ENCODE measurements at regions of chr20 and their contacts with region 1.

Region 1: DNA sequence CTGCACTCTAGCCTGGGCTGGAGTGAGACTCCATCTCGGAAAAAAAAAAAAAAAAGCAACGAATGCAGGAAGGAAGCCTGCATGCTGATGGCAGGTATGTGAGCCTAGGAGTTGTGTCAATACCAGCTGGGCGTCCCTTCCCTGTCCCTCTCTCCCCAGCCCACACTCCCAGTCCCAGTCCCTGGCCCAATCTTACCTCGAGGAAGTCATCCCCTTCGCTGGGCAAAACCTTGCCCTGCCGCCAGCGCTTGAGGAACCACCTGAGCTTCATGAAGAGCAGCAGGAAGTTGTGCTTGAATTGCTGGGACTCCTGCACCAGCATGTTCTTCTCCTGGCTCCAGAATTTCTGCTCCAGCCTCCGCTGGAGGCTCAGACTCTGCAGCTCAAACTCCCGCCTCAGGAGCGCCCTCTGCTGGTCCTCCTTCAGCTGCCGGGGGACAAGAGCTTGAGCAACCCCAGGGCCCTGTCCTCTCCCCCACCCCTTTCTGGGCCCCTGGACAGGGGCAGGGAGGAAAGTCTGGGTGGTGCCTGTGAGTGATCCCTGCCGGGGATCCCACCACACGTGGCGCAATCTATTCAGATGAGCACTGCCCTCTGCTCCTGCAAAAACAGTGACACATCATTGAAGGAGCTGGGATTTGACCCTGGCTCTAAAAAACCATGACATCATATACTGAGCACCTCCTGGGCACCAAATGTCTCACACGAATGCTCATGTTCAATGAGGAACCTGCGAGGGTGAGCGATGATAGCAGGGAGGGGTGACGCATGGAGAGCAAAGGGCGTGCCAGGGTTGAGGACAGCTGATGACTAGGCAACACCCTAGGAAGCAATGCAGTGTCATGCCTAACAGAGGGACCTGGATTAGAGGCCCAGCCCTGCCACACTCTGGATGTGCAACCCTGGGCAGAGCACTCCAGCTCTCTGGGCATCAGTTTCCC is 35.0 kb upstream of the DSN1 start:
- DNase-seq: peak; percentile 88
- H3K27ac ChIP-seq: peak overlapping the region; percentile 65
- CTCF ChIP-seq: peak; percentile 97

Region 2: GRCh38 chr20:36792422-36792821 is 16.2 kb before region 1 on chr20:
- CTCF ChIA-PET with region 1: interaction called, 26 read pairs
- POLR2A ChIA-PET with region 1: no interaction called
- DNase-seq: peak; percentile 76
- H3K27ac ChIP-seq: no peak overlapping the region
- CTCF ChIP-seq: no peak

Region 3: GRCh38 chr20:36835453-36836198 is 27.0 kb after region 1 on chr20:
- CTCF ChIA-PET with region 1: interaction called, 10 read pairs
- POLR2A ChIA-PET with region 1: interaction called, 3 read pairs
- DNase-seq: peak; percentile 100
- H3K27ac ChIP-seq: peak overlapping the region; percentile 97
- CTCF ChIP-seq: no peak

Region 4: DNA sequence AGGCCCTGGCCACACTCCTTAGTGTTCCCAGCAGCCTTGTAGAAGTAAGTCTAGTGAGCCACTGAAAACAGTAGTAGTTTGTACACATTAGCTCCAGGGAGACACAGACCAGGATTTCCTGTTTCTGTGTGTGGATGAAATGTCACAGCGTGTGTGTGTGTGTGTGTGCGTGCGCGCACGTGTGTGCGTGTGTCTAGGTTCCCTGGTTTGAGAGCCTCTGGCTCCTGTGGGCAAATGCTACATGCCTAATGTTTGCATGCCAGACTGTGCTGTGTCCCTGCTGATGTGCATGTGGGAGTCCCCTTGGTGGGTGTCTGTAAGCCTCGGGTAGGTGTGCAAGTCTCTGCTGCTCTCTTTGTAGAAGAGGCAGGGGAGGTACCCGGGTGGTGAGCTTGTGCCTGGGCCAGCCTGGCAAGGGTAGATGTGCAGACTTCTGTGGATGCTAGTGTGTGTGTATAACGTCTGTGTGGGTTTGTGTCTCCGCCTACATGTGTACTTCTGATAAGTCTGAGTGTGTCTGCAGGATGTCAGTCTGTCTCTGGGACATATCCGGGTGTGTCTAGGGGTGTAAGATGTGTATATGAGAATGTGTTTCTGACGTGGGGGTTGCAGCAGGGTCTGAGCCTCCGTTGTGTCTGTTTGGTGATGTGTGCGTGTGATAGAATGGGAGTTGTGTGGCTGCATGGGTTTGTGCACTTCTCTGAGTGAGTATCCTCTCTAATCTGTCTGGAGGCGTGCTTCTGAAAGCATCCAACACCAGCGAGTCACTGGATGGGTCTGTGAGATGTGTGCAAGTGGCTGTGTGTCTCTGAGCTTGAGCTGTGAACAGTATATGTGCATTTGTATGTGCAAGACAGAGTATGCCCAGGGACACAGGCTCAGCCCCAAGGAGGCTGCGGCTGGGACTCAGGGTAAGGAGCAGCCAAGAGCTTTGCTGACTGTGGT is 48.4 kb after region 1 on chr20:
- CTCF ChIA-PET with region 1: interaction called, 15 read pairs
- POLR2A ChIA-PET with region 1: interaction called, 4 read pairs
- DNase-seq: no peak
- H3K27ac ChIP-seq: peak overlapping the region; percentile 99
- CTCF ChIP-seq: no peak

Region 5: DNA sequence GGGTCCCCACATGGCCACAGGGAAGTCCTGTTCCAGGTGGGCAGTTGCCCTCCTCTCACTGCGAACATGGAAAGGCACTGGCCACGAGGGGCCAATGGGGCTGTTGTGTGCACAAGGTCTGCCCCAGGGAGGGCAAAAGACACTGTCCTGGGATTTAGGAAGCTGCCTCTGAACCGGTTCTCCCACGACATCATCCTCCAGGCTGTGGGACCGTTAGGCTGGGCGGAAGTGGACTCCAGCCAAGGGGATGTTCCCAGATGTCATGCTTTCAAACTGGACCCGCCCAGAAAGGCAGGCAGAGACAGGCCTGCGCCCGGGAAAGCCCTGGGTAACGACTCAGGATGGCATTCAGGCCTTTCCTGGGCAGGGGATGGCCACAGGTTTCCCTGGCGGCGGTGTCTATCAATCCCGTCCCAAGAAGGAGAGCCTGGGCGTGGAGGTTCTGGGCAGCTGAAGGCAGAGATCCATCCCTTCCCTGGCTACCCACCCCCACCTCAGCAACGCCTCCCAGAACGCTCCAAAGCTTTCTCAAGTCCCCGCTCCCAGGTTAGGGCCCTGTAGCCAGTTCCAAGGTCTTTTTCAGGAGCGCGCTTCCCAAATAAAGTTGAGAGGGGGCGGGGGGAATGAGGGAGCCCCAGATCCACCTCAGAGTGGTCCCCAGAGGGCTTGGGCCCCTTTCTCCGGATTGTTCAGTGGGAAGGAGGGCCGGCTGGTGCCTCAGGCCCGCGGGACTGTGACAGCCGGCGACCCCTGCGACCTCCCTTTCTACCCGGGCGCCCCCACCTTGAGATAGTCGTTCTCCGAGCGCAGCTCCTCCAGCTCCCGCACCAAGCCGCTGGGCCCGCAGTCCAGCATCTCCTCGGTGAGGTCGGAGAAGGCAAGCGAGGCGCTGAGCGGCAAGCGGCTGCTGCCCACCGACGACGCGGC is 53.6 kb after region 1 on chr20:
- CTCF ChIA-PET with region 1: interaction called, 16 read pairs
- POLR2A ChIA-PET with region 1: interaction called, 3 read pairs
- DNase-seq: peak; percentile 100
- H3K27ac ChIP-seq: peak overlapping the region; percentile 99
- CTCF ChIP-seq: no peak

Measured in RWPE1 (cell line).